Activated CD4-positive, alpha-beta T cell treated with anti-CD3 and anti-CD28 coated beads for 36 hours (primary cell): ENCODE measurements at regions of chr6 and their contacts with region 1.

Region 1: DNA sequence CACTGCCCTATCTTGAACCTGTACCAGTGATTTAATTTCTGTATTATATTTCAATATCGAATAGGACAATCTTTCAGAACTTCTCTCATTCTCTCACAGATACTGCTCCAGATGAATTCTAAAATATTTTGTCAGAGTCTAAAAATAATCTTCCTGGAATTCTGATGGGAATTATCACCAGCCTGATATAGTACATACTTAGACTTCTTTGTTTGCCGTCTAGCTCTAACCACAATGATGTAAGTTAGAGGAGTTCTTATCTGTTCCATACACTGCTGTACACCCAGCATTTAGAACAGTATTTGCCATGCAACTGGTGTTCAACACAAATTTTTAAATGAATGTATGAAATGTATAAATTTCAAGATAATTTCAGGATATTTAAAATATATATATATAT is 1.3 kb upstream of the HUS1B start:
- DNase-seq: no peak
- ATAC-seq: no peak
- H3K4me3 Mint-ChIP-seq: no peak overlapping the region
- H3K27ac Mint-ChIP-seq: no peak overlapping the region
- H3K4me1 Mint-ChIP-seq: peaks cover 48% of the 10 kb centered on the region
- H3K27me3 Mint-ChIP-seq: no peaks in the 10 kb centered on the region

Region 2: GRCh38 chr6:562052-562676 is 96.1 kb before region 1 on chr6:
- CTCF ChIA-PET with region 1: no interaction called
- POLR2A ChIA-PET with region 1: no interaction called
- intact Hi-C with region 1: no loop called
- DNase-seq: no peak
- ATAC-seq: no peak
- H3K4me3 Mint-ChIP-seq: peak overlapping the region; percentile 18
- H3K27ac Mint-ChIP-seq: peak overlapping the region; percentile 86
- H3K4me1 Mint-ChIP-seq: peaks cover 49% of the 10 kb centered on the region
- H3K27me3 Mint-ChIP-seq: no peaks in the 10 kb centered on the region

Region 3: DNA sequence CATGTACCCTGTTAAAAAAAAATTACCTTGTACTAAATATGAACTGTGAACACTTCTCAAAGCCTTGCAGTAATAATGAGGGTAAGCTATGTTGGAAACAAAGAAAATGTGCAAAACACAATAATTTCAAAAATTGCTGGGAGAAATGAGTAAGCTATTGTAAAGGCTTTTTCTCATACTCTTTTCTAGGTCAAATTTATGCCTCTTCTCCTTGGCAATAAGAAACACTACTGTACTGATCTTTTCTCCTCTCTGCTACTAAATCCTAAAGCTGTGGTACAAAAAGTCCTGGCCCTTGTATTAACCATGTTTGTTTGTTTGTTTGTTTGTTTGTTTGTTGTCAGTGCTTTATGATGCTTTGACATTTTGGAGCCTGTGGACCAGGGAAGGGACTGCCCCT is 16.2 kb after region 1 on chr6:
- CTCF ChIA-PET with region 1: interaction called, 3 read pairs
- POLR2A ChIA-PET with region 1: interaction called, 10 read pairs
- intact Hi-C with region 1: no loop called
- DNase-seq: no peak
- ATAC-seq: no peak
- H3K4me3 Mint-ChIP-seq: no peak overlapping the region
- H3K27ac Mint-ChIP-seq: no peak overlapping the region
- H3K4me1 Mint-ChIP-seq: peaks cover 16% of the 10 kb centered on the region
- H3K27me3 Mint-ChIP-seq: no peaks in the 10 kb centered on the region